ENCODE measurements at regions of chr17 and their contacts with region 1.

Region 1: GRCh38 chr17:49575579-49576087 is at the start of gene NXPH3:
- DNase-seq: peak; percentile 63
- H3K4me3 ChIP-seq: peak within 1 kb of the TSS; percentile 63 to 76
- H3K27ac ChIP-seq: peak within 1 kb of the TSS; percentile 84
- H3K4me1 ChIP-seq: peaks cover 42% of the 10 kb centered on the region
- H3K27me3 ChIP-seq: no peaks in the 10 kb centered on the region
- CTCF ChIP-seq: peak; percentile 68 to 85 (median 76)
- POLR2A ChIP-seq: no peak
- total RNA-seq, gene NXPH3: 4.1 to 5.6 TPM

Region 2: DNA sequence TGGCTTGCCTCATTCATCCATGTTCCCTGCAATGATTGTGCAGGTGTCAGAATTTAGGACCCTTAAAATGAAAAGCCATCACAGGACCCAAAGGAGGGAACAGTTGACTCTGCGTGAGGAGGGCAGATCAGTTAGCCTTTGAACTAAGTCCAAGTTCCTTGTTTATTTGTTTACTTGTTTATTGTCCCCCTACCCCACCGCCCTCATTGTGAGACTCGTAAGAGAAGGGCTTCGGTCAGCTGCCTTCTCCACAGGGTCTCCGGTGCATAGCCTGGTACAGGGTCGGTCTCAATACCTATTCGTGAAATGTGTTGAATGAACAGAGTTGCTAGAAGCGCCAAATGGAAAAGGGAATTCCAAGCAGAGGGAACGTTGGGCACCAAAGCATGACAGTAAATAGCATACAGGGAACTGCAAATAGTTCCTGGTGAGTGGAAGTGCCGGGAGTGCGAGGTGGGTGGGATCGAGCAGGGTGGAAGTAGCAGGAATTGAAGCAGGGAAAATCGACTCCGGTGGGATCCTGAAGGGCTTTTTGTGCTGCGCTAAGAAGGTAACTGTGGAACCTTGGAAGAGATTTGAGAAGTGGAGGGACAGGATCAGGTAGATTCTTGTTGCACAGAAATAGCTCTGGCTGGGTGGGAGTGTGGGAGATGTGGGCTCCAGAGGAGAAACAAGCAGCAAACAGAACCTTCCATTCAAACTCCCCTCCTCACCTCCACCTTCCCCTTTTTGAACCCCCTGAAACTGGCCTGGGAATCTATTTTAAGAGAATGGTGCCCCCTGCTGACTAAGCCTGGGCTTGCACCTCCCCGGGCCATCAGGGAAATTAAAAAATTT is 119.4 kb after region 1 on chr17:
- intact Hi-C with region 1: loop called (anchors 5 kb)
- DNase-seq: peak; percentile 81
- H3K4me3 ChIP-seq: no peak overlapping the region
- H3K27ac ChIP-seq: no peak overlapping the region
- H3K4me1 ChIP-seq: peaks cover 5% of the 10 kb centered on the region
- H3K27me3 ChIP-seq: no peaks in the 10 kb centered on the region
- CTCF ChIP-seq: peak; percentile 88 to 93 (median 92)
- POLR2A ChIP-seq: no peak

Region 3: DNA sequence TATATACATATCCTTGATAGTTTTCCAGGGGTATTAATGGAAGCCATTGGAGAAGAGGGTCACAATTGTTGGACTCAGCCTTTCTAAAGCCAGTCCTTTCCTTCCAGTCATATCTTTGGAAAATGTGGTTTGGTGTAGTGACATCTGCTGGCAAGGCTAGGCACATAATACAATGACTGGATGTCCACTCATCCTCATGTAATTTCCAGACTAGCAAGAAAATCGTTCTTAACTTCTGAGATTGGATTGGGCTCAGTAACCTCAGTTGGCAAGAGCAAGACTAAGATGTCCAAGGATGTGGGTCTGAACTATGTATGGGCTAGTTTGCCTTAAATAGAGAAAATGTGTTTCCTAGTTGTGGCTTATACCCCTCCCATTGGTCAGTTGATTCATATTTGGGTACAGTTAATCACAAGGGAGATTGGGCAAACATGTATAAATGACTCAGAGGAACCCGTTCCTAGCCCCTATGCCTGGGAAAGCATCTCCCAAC is 204.2 kb after region 1 on chr17:
- intact Hi-C with region 1: loop called (anchors 10 kb)
- DNase-seq: peak; percentile 53
- H3K4me3 ChIP-seq: no peak overlapping the region
- H3K27ac ChIP-seq: no peak overlapping the region
- H3K4me1 ChIP-seq: peaks cover 16% of the 10 kb centered on the region
- H3K27me3 ChIP-seq: no peaks in the 10 kb centered on the region
- CTCF ChIP-seq: peak in 2 of 3 experiments; percentile 39 to 49
- POLR2A ChIP-seq: no peak

Region 4: DNA sequence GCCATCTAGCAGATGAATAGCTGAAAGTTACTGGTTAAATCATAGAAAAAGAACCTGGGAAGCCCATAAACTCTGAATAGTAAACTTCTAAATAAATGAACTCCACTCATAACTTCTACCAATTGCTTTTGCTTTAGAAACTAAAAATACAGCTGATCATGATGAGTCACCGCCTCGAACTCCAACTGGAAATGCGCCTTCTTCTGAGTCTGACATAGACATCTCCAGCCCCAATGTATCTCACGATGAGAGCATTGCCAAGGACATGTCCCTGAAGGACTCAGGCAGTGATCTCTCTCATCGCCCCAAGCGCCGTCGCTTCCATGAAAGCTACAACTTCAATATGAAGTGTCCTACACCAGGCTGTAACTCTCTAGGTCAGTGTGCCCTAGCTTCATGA is 222.5 kb after region 1 on chr17:
- intact Hi-C with region 1: no loop called
- DNase-seq: no peak
- H3K4me3 ChIP-seq: no peak overlapping the region
- H3K27ac ChIP-seq: no peak overlapping the region
- H3K4me1 ChIP-seq: no peaks in the 10 kb centered on the region
- H3K27me3 ChIP-seq: no peaks in the 10 kb centered on the region
- CTCF ChIP-seq: no peak
- POLR2A ChIP-seq: no peak